ENCODE measurements at regions of chr3 and their contacts with region 1.

Region 1: GRCh38 chr3:160003520-160004128 is 15.0 kb downstream of the IL12A start:
- DNase-seq: peak; percentile 68
- H3K4me3 ChIP-seq: no peak overlapping the region
- H3K27ac ChIP-seq: no peak overlapping the region
- H3K4me1 ChIP-seq: no peaks in the 10 kb centered on the region
- H3K27me3 ChIP-seq: no peaks in the 10 kb centered on the region
- CTCF ChIP-seq: peak; percentile 47

Region 2: DNA sequence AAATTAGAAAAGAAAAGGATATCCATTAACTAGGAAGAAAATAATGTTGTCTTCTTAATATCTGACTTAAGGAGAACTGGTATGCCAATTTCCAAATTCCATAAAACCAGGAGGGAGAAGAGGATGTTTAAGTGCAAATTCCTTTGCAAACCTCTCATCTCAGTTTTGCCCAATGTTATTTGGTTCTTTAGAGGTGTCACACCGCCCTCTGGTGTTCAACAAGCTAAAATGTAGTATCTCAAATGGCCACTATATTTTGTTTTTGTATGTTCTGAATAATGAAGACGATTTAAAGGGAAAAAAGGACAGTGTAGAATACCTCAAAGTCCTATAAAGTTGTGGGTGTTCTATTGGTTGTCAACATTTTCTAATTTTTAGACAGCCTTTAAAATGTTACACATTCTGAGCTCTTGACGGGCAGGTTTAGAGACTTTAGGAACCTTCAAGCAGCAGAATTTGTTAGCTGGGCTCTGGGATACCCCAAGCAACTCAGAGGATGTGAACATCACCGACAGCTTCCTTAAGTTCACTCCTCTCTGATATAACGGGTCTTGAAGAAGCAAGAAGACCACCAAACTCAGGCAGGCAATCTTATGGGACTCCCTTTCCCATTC is 743.5 kb before region 1 on chr3:
- intact Hi-C with region 1: loop called (anchors 5 kb)
- DNase-seq: peak; percentile 58
- H3K4me3 ChIP-seq: no peak overlapping the region
- H3K27ac ChIP-seq: no peak overlapping the region
- H3K4me1 ChIP-seq: no peaks in the 10 kb centered on the region
- H3K27me3 ChIP-seq: no peaks in the 10 kb centered on the region
- CTCF ChIP-seq: peak; percentile 47

Region 3: GRCh38 chr3:159616212-159616825 is 387.3 kb before region 1 on chr3:
- intact Hi-C with region 1: loop called (anchors 10 kb)
- DNase-seq: peak; percentile 58
- H3K4me3 ChIP-seq: no peak overlapping the region
- H3K27ac ChIP-seq: no peak overlapping the region
- H3K4me1 ChIP-seq: no peaks in the 10 kb centered on the region
- H3K27me3 ChIP-seq: no peaks in the 10 kb centered on the region
- CTCF ChIP-seq: peak; percentile 50

Region 4: GRCh38 chr3:159828542-159828943 is 175.1 kb before region 1 on chr3:
- intact Hi-C with region 1: loop called (anchors 5 kb)
- DNase-seq: no peak
- H3K4me3 ChIP-seq: no peak overlapping the region
- H3K27ac ChIP-seq: no peak overlapping the region
- H3K4me1 ChIP-seq: no peaks in the 10 kb centered on the region
- H3K27me3 ChIP-seq: no peaks in the 10 kb centered on the region
- CTCF ChIP-seq: peak; percentile 50

Region 5: DNA sequence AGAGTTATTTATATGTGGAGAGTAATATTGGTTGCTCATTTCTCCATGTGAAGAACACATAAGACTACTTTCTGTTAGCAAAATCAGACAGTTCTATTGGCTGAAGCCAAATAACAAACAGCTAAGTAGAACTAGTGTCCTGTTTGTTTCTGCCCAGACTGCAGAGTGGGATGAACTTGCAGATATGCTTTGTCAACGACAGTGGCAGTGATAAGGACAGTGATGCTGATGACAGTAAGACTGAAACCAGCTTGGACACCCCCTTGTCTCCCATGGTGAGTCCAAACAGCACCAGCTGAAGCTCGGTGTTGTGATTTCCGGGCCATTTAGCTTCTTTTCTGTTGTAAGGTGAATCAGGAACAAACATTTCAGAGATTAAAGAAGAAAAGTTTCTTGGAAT is 117.6 kb before region 1 on chr3:
- intact Hi-C with region 1: loop called (anchors 2 kb)
- DNase-seq: no peak
- H3K4me3 ChIP-seq: no peak overlapping the region
- H3K27ac ChIP-seq: no peak overlapping the region
- H3K4me1 ChIP-seq: no peaks in the 10 kb centered on the region
- H3K27me3 ChIP-seq: no peaks in the 10 kb centered on the region
- CTCF ChIP-seq: no peak

Region 6: DNA sequence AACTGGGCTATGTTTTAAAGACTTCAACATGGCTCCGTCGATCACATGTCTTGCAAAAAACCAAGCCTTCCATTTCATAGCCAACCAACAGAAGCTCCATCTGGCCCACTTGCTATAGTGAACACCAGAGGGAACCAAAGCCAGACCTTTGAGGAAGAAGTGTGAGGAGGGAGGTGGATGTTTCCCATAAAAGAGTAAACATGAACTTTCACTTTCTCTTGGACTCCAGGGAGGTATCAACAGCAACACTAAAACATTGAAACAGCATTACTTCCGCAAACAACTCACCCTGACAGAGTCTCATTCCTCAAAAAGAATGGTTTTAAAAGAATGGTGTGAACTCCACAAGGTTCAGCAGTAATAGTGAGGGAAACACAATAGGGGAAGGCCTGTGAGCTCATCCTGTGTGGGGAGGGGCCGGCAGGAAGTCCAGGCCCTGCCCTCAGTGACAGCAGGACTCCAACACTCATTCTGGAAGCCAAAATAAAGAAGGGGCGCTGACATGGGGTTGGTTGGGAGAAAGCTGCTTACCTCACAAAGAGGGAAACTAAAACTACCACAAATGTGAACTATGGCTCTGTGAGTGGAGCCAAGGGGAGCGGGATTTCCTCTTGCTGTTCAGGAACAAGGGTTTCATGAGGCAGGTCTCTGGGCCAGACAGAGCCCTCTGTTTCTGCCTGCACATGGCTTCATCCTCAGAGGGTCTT is 74.0 kb before region 1 on chr3:
- intact Hi-C with region 1: loop called (anchors 5 kb)
- DNase-seq: peak; percentile 35
- H3K4me3 ChIP-seq: no peak overlapping the region
- H3K27ac ChIP-seq: no peak overlapping the region
- H3K4me1 ChIP-seq: no peaks in the 10 kb centered on the region
- H3K27me3 ChIP-seq: no peaks in the 10 kb centered on the region
- CTCF ChIP-seq: peak; percentile 37

Region 7: DNA sequence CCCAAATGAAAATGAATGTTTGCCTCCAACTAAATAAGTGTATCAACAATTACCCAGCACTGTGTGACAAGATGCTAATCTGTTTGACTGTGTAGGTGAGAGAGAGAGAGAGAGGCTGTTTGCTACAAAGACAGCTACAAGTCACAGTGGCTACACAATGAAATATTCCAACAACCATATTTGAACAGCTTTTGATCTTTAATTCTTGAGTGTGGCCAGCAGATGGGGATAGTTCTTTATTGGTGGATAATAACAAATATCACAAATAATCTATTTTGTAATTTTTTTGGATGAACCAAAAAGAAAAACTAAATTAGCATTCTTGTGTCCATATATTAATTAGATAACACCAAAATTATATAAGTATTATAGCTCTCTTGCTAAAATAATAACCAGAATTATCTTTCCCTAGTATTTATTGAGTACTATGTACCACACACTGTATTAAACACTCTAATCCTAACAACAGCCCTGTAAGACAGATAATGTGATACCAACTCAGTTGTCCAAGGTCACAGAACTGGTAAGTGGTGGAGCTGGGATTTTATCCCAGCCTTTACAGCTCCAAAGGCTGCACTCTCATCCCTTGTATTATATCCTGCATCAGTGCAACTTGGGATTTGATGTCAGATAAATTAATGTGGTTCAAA is 159.7 kb after region 1 on chr3:
- intact Hi-C with region 1: no loop called
- DNase-seq: no peak
- H3K4me3 ChIP-seq: no peak overlapping the region
- H3K27ac ChIP-seq: no peak overlapping the region
- H3K4me1 ChIP-seq: no peaks in the 10 kb centered on the region
- H3K27me3 ChIP-seq: no peaks in the 10 kb centered on the region
- CTCF ChIP-seq: peak; percentile 34

Measured in colonic mucosa (tissue), 4 donors.